PC-3 (cell line): ENCODE measurements at regions of chr22 and their contacts with region 1.

Region 1: DNA sequence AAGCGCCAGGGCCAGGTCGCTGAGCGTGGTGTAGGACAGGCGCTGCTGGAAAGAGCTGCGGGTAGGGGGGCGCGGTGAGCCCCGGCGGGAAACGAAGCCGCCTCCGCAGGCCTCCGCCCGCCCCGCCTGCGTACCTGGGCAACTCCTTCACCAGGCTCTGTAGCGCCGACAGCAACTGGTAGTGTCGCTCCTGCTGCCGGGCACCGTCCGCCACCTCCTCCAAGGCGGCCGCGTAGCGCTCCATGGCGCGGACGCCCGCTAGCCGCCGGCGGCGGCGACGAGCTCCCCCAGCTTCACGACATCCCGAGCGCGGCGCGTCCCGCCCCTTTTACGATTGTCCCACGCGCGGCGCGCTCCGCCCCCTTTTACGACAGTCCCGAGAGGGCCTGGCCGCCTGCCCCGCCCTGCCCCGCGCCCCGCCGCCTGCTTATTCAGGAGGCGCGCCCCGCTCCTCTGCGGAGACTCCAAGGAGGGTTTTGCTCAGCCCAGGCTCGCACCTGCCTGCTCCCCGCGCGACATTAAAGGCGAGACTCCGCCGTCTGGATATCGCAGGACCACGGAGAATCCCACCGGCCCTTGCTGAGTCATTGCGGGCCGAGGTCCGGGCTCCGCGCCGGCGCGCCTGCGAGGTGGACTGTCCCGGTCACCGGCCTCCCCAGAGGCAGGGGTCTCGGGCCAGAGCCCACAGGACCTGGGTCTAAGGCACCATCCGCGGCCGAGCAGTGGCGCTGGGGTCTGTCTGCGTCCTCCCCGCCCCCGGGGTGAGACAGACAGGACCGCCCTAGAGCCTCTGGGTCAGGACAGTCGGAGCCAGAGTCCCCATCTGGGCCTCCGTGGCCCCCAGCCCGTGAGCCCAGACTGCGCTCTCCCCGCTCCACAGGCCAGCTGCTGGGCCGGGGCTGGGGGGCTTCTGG is at the start of gene DGCR6L:
- DNase-seq: peak; percentile 88
- ATAC-seq: peak; percentile 61
- H3K4me3 ChIP-seq: peak within 1 kb of the TSS; percentile 92
- H3K27ac ChIP-seq: peak within 1 kb of the TSS; percentile 65
- H3K4me1 ChIP-seq: peaks cover 12% of the 10 kb centered on the region; the same call in 1 of the 2 replicates
- H3K27me3 ChIP-seq: no peaks in the 10 kb centered on the region
- CTCF ChIP-seq: no peak
- total RNA-seq, gene DGCR6L: 78.1 and 84.8 TPM in 2 replicates

Region 2: GRCh38 chr22:20205964-20206708 is 113.9 kb before region 1 on chr22:
- CTCF ChIA-PET with region 1: no interaction called
- POLR2A ChIA-PET with region 1: no interaction called
- intact Hi-C with region 1: no loop called
- DNase-seq: peak; percentile 48
- ATAC-seq: peak; percentile 75
- H3K4me3 ChIP-seq: peak overlapping the region; percentile 64
- H3K27ac ChIP-seq: no peak overlapping the region
- H3K4me1 ChIP-seq: peaks cover 14% of the 10 kb centered on the region; the same call in 1 of the 2 replicates
- H3K27me3 ChIP-seq: no peaks in the 10 kb centered on the region
- CTCF ChIP-seq: no peak

Region 3: DNA sequence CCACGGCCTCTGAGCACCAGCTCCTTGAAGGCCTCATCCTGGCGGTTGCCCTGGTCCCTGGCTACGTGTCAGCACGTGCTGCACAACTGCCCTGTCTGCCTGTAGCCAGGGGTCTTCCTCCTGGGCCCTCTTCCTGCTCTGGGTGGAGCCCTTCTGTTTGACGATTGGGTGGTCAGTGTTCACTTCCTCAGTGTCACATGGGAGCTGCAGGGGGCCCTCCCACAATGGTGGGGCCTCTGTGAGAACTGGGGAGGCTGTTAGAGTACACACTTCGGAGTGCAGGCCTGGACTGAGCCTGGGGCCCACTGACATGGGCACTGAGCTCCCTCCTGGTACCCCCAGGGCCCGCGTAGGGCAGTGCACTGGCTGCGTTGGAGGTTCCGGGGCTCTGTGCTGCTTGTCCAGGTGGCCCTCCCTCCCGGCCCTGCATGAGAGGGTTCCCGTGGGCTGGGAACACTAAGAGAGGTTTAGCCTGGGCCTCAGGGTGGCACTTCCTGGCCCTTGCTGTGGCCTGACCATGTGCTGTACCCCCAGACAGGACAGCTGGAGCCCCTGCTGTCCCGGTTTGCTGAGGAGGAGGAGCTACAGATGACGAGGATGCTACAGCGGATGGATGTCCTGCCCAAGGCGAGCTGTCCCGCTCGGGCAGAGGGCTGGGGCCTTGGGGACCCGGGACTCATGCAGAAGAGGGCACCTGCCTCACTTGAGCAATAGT is 13.9 kb before region 1 on chr22:
- CTCF ChIA-PET with region 1: no interaction called
- POLR2A ChIA-PET with region 1: no interaction called
- intact Hi-C with region 1: no loop called
- DNase-seq: no peak
- ATAC-seq: no peak
- H3K4me3 ChIP-seq: no peak overlapping the region
- H3K27ac ChIP-seq: no peak overlapping the region
- H3K4me1 ChIP-seq: no peaks in the 10 kb centered on the region
- H3K27me3 ChIP-seq: no peaks in the 10 kb centered on the region
- CTCF ChIP-seq: no peak

Region 4: DNA sequence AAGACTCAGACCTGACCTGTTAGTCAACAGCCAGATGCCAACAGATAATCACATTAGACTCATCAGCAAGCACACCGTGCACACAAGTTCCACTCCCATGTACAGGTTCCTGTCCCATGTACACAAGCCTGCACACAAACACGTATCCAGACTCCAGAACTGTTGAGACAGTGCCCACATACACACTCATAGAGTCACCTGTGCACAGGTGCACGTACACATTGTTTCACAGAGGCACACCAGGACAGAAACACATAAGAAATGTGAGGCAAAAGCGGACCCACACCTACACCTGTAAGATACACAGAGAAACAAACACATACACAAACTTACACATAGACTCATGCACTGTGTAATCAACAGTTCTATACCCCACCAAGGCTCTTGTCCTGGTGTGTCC is 71.2 kb after region 1 on chr22:
- CTCF ChIA-PET with region 1: no interaction called
- POLR2A ChIA-PET with region 1: no interaction called
- intact Hi-C with region 1: no loop called
- DNase-seq: no peak
- ATAC-seq: no peak
- H3K4me3 ChIP-seq: no peak overlapping the region
- H3K27ac ChIP-seq: no peak overlapping the region
- H3K4me1 ChIP-seq: peaks cover 18% of the 10 kb centered on the region
- H3K27me3 ChIP-seq: no peaks in the 10 kb centered on the region
- CTCF ChIP-seq: no peak

Region 5: GRCh38 chr22:20469110-20469868 is 149.3 kb after region 1 on chr22:
- CTCF ChIA-PET with region 1: no interaction called
- POLR2A ChIA-PET with region 1: interaction called, 13 read pairs
- intact Hi-C with region 1: no loop called
- DNase-seq: no peak
- ATAC-seq: no peak
- H3K4me3 ChIP-seq: no peak overlapping the region
- H3K27ac ChIP-seq: no peak overlapping the region
- H3K4me1 ChIP-seq: no peaks in the 10 kb centered on the region
- H3K27me3 ChIP-seq: no peaks in the 10 kb centered on the region
- CTCF ChIP-seq: no peak